GM12878 (cell line): ENCODE measurements at regions of chr2 and their contacts with region 1.

Region 1: DNA sequence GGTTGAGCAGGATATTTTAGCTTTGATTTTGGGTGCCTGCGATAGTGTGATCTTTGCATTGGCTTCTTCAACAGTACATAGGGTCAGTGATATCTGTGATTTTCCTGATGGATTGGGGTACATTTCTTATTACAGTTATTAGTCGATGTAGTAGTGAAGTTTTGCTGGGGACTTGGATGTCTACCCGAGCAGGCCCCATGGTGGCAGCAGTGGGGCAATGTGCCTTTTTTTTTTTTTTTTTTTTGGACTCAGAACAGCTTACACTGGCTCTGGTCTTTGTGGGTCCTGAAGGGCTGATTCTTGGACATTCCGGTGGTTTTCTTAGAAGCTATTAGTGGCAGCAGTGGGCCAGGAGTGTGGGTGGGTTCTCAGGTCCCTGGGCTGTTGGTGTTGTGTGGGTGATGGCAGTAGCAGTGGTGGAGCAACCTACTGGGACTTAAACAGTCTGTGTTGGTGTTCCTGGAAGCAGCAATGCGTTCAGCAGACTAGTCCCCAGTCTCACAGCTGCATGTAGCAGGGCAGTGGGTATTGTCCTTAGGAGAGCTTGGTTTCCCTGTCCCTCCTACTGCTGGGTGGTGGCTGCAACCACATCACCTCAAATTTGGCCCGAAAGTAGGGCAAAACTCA is 53.7 kb upstream of the SLC4A10 start:
- DNase-seq: no peak
- ATAC-seq: peak; percentile 74
- H3K4me3 ChIP-seq: no peak overlapping the region
- H3K27ac ChIP-seq: no peak overlapping the region
- H3K4me1 ChIP-seq: no peaks in the 10 kb centered on the region
- H3K27me3 ChIP-seq: no peaks in the 10 kb centered on the region
- CTCF ChIP-seq: peak; percentile 13 to 37 (median 32); a peak in 5 of 6 replicates
- EP300 ChIP-seq: no peak
- POLR2A ChIP-seq: no peak
- RAD21 ChIP-seq: no peak

Region 2: GRCh38 chr2:161586517-161587167 is 16.1 kb after region 1 on chr2:
- CTCF ChIA-PET with region 1: interaction called, 7 read pairs
- POLR2A ChIA-PET with region 1: no interaction called
- RAD21 ChIA-PET with region 1: no interaction called
- SMC1A ChIA-PET with region 1: interaction called, 10 read pairs
- in situ Hi-C with region 1: no loop called
- intact Hi-C with region 1: no loop called
- DNase-seq: no peak
- ATAC-seq: peak; percentile 60; the same call in 2 of the 3 replicates
- H3K4me3 ChIP-seq: no peak overlapping the region
- H3K27ac ChIP-seq: no peak overlapping the region
- H3K4me1 ChIP-seq: no peaks in the 10 kb centered on the region
- H3K27me3 ChIP-seq: no peaks in the 10 kb centered on the region
- CTCF ChIP-seq: peak; percentile 60 to 65 (median 61)
- EP300 ChIP-seq: no peak
- POLR2A ChIP-seq: no peak
- RAD21 ChIP-seq: peak; percentile 80